Right ventricle myocardium inferior (tissue), 1 donor: ENCODE measurements at regions of chr12 and their contacts with region 1.

Region 1: DNA sequence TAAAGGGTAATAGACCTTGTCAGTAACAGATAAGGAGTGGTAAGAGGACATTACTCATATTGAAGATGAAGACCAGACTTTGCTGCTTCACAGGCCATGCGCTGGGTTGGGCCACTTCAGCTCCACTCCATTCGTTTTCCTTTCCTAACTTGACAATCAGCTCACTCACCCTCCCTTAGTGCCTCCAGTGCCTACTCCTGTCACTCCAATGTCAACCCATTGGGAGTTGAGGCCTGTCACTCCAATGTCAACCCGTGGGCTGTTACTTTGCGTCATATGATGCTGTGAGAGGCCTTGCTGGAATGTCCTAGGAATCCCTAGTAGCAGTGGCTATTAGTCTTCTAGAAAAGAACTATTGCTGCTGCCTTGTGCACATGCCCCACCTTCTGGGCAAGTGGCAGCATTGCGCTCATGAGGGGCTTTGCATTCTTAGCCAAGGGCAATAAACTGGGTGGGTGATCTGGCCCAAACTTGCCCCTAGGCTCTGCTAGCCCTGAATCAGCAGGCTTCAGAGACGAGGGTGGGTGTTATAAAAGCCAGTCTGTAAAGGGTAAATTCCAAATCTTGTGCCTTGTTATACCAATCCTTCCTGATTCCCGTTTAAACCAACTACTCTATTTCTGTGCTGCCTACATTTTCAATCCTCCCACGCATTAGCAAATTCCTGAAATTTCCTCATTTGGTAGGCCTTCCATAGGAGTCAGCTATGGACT is 36.1 kb downstream of the BAZ2A start:
- DNase-seq: no peak
- ATAC-seq: peak; percentile 47

Region 2: GRCh38 chr12:56630160-56630632 is 36.1 kb after region 1 on chr12 and contains the start of gene BAZ2A:
- intact Hi-C with region 1: loop called (anchors 5 kb)
- DNase-seq: peak; percentile 95
- ATAC-seq: peak; percentile 90
- total RNA-seq, gene BAZ2A: 31.4 TPM

Region 3: DNA sequence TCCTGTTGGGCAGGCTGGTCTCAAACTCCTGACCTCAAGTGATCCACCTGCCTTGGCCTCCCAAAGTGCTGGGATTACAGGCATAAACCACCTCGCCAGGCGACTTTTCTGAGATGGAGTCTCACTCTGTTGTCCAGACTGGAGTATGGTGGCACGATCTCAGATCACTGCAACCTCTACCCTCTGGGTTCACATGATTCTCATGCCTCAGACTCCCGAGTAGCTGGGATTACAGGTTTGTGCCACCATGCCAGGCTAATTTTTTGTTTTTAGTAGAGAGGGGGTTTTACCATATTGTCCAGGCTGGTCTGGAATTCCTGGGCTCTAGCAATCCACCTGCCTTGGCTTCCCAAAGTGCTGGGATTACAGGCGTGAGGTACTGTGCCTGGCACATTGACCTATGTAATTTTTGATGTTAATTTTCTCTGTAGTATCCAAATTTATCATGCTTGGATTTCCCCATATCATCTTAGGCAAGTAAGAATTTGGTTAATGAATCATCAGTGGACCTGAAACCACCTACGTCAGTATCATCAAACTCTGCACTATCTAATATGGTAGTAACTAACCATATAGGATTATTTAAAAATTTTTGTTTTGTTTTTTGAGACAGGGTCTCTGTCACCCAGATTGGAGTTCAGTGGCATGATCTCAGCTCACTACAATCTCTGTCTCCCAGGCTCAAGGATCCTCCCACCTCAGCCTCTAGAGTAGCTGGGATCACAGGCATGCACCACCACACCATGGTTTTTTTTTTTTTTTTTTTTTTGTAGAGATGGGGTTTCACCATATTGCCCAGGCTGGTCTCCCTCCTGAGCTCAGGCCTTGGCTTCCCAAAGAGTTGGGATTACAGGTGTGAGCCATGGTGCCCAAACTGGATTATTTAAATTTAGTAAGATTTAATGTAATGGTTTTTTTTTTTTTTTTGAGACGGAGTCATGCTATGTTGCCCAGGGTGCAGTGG is 63.6 kb after region 1 on chr12:
- intact Hi-C with region 1: no loop called
- DNase-seq: no peak
- ATAC-seq: no peak